ENCODE measurements at regions of chr1 and their contacts with region 1.

Region 1: GRCh38 chr1:160376525-160377131 is 9.8 kb downstream of the NHLH1 start:
- DNase-seq: peak in 2 of 10 donors; percentile 50 to 60
- H3K4me3 ChIP-seq: peak overlapping the region in 8 of 59 donors; percentile 2 to 35 (median 16)
- H3K27ac ChIP-seq: peak overlapping the region in 53 of 59 donors; percentile 50 to 92 (median 78)
- H3K27me3 ChIP-seq: no peaks in the 10 kb centered on the region
- CTCF ChIP-seq: peak; percentile 80 to 98 (median 93)

Region 2: GRCh38 chr1:159936273-159936904 is 440.2 kb before region 1 on chr1:
- intact Hi-C with region 1: loop called in 1 of 2 experiments (anchors 5 kb)
- DNase-seq: peak in 5 of 10 donors; percentile 45 to 78 (median 55)
- H3K4me3 ChIP-seq: no peak overlapping the region
- H3K27ac ChIP-seq: no peak overlapping the region
- H3K27me3 ChIP-seq: peaks cover 0 to 18% (median 0%) of the 10 kb centered on the region in 45 donors
- CTCF ChIP-seq: peak; percentile 78 to 100 (median 97)

Region 3: GRCh38 chr1:160085686-160086455 is 290.8 kb before region 1 on chr1:
- intact Hi-C with region 1: loop called in 1 of 2 experiments (anchors 5 kb)
- DNase-seq: peak; percentile 92 to 96 (median 95)
- H3K4me3 ChIP-seq: peak overlapping the region in 52 of 59 donors; percentile 6 to 79 (median 34)
- H3K27ac ChIP-seq: peak overlapping the region; percentile 75 to 100 (median 97)
- H3K27me3 ChIP-seq: no peaks in the 10 kb centered on the region
- CTCF ChIP-seq: peak; percentile 67 to 98 (median 94)

Region 4: GRCh38 chr1:160149716-160150115 is 226.9 kb before region 1 on chr1:
- intact Hi-C with region 1: no loop called
- DNase-seq: no peak
- H3K4me3 ChIP-seq: no peak overlapping the region
- H3K27ac ChIP-seq: peak overlapping the region in 18 of 59 donors; percentile 2 to 69 (median 42)
- H3K27me3 ChIP-seq: no peaks in the 10 kb centered on the region
- CTCF ChIP-seq: no peak

Region 5: DNA sequence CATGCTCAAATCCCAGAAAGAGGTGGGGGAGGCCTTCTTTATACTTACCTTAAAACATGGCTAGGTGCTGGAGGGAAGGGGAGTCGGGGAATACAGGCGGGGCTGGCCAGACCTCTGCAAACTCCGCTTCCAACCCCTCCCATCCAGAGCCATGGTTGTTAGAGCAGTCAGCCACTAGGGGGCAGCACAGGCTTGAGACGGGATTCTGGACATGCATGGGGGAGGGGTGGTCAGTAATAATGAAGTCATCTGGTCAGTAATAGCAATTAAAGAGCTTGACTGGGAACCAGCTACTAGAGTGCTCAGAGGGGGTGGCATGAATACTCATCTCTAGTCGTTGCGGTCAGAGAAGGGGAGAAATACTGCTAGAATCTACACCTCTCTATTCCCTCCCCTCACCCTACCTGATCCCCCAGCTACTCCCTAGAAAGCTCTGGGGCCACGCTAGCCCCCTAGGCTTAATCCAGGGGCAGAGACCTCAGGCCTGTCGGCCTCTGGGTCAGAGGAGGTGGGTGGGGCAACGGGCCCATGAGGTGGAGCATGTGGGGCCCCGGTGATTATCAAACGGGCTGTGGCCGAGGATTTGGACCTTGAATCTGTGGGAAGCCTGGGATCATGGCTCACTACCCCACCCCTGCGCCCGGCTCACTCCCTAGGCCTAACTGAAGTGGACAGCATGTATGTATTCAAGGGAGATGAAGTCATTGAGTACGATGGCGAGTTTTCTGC is 183.4 kb before region 1 on chr1:
- intact Hi-C with region 1: loop called in 1 of 2 experiments (anchors 5 kb)
- DNase-seq: peak; percentile 71 to 93 (median 84)
- H3K4me3 ChIP-seq: peak overlapping the region in 57 of 59 donors; percentile 5 to 59 (median 42)
- H3K27ac ChIP-seq: peak overlapping the region in 45 of 59 donors; percentile 10 to 86 (median 65)
- H3K27me3 ChIP-seq: no peaks in the 10 kb centered on the region
- CTCF ChIP-seq: peak; percentile 93 to 99 (median 97)

Region 6: GRCh38 chr1:160261893-160262794 is 114.5 kb before region 1 on chr1 and contains the start of gene DCAF8:
- intact Hi-C with region 1: loop called in 1 of 2 experiments (anchors 10 kb)
- DNase-seq: peak; percentile 93 to 98 (median 97)
- H3K4me3 ChIP-seq: peak within 1 kb of the TSS; percentile 47 to 97 (median 89)
- H3K27ac ChIP-seq: peak within 1 kb of the TSS; percentile 88 to 100 (median 98)
- H3K27me3 ChIP-seq: no peaks in the 10 kb centered on the region
- CTCF ChIP-seq: peak in 40 of 56 donors; percentile 4 to 55 (median 28)
- total RNA-seq, gene DCAF8: 111 to 260 (median 188) TPM

Region 7: GRCh38 chr1:160291248-160292220 is 85.1 kb before region 1 on chr1:
- intact Hi-C with region 1: loop called in 1 of 2 experiments (anchors 2 kb)
- DNase-seq: peak in 9 of 10 donors; percentile 62 to 79 (median 72)
- H3K4me3 ChIP-seq: peak overlapping the region in 2 of 59 donors; percentile 1 to 10
- H3K27ac ChIP-seq: peak overlapping the region; percentile 30 to 93 (median 81)
- H3K27me3 ChIP-seq: no peaks in the 10 kb centered on the region
- CTCF ChIP-seq: peak; percentile 61 to 92 (median 84)

Region 8: DNA sequence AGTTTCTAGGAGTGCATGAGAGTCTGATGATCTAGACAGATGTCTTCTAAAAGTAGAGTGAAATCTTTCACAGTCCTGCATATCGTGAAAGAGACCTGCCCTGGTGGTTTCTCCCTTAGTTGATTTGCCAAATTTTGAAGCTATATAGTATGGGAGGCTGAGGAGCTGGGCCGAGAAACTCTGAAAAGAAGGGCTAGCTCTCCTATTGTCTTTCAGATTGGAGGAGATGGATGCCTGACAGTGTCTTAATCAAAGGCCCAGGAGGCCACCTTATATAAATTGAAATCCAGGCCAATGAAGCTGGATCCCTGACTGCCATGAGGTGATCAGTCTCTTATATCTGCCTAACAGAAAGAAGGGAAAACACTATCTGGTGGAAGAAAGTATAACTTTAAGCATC is 221.1 kb after region 1 on chr1:
- intact Hi-C with region 1: no loop called
- DNase-seq: no peak
- H3K4me3 ChIP-seq: no peak overlapping the region
- H3K27ac ChIP-seq: no peak overlapping the region
- H3K27me3 ChIP-seq: peaks cover 0 to 5% (median 0%) of the 10 kb centered on the region in 45 donors
- CTCF ChIP-seq: no peak

Measured in dorsolateral prefrontal cortex (tissue), 120 donors.